Cardiac septum (tissue), 1 donor: ENCODE measurements at regions of chr12 and their contacts with region 1.

Region 1: GRCh38 chr12:127284870-127285431 is 982.0 kb upstream of the TMEM132C start:
- DNase-seq: no peak

Region 2: DNA sequence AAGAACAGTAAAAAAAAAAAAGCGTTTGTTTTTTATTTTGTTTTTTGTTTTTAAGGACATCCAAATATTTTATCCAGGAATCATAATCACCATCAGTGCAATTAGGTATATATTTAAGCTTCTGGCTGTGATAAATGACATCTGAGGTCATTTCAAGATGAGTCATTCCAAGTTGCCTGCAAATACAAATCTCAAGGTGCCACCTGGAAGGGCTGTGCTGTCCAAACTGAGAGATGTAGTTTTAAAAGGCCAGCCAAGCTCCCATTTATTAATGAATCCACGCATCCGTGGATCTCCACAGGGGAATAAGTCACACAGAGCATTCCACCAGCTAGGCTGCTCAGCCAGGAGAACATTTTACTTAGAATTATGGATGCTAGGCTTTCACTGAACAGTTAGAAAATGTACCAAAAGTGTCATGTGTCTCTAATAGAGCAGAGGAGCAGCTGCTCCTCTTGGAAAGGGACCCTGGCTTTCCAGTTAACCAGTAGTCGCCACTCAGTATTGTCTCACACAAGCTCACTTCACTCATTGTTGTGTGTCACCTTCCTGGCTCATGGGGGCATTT is 169.4 kb before region 1 on chr12:
- intact Hi-C with region 1: loop called (anchors 5 kb)
- DNase-seq: no peak